ENCODE measurements at regions of chr15 and their contacts with region 1.

Region 1: GRCh38 chr15:71841563-71841962 is 31.2 kb downstream of the NR2E3 start:
- DNase-seq: no peak
- H3K4me3 ChIP-seq: no peak overlapping the region
- H3K27ac ChIP-seq: no peak overlapping the region
- H3K4me1 ChIP-seq: no peaks in the 10 kb centered on the region
- H3K27me3 ChIP-seq: no peaks in the 10 kb centered on the region
- CTCF ChIP-seq: peak in 1 of 3 experiments; percentile 25; a peak in 2 of 4 replicates
- EP300 ChIP-seq: no peak
- POLR2A ChIP-seq: no peak
- RAD21 ChIP-seq: no peak

Region 2: DNA sequence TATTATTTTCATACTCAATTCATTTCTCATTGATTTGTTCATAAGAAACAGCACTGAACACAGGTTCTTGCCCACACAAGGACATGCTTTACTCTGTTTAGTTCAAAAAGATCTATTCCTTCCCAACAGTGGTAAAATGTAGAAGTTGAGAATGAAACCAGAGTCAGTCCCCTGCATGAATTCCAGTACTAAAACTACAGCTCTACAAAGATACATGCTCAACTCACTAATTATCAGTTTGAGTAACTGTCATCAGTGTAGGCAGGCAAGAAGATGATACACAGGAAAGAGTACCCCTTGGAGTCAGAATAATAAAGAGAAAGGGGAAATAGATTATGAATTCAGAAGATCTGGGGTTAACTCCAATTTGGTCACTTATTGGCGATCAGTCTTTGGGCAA is 12.0 kb after region 1 on chr15:
- CTCF ChIA-PET with region 1: interaction called, 10 read pairs
- POLR2A ChIA-PET with region 1: no interaction called
- DNase-seq: no peak
- H3K4me3 ChIP-seq: no peak overlapping the region
- H3K27ac ChIP-seq: no peak overlapping the region
- H3K4me1 ChIP-seq: no peaks in the 10 kb centered on the region
- H3K27me3 ChIP-seq: no peaks in the 10 kb centered on the region
- CTCF ChIP-seq: no peak
- EP300 ChIP-seq: no peak
- POLR2A ChIP-seq: no peak
- RAD21 ChIP-seq: no peak